Motor neuron (in vitro differentiated cells): ENCODE measurements at regions of chr22 and their contacts with region 1.

Region 1: GRCh38 chr22:26610072-26610958 is 7.5 kb downstream of the CRYBB1 start:
- ATAC-seq: peak in 5 of 8 experiments; percentile 17 to 90 (median 69)
- H3K4me3 ChIP-seq: no peak overlapping the region
- H3K27ac ChIP-seq: no peak overlapping the region
- H3K4me1 ChIP-seq: peaks cover 9 to 16% of the 10 kb centered on the region in 2 donors

Region 2: GRCh38 chr22:26398741-26399153 is 211.6 kb before region 1 on chr22:
- in situ Hi-C with region 1: loop called in 1 of 9 experiments (anchors 25 kb)
- ATAC-seq: peak in 6 of 8 experiments; percentile 55 to 96 (median 76)
- H3K4me3 ChIP-seq: no peak overlapping the region
- H3K27ac ChIP-seq: no peak overlapping the region
- H3K4me1 ChIP-seq: peaks cover 5 to 15% of the 10 kb centered on the region in 2 donors